ENCODE measurements at regions of chr5 and their contacts with region 1.

Region 1: GRCh38 chr5:43120720-43121564 is at the start of gene ZNF131:
- DNase-seq: peak; percentile 95 to 100 (median 98)
- H3K4me3 ChIP-seq: peak within 1 kb of the TSS; percentile 85 to 87
- H3K4me3 Mint-ChIP-seq: peak within 1 kb of the TSS; percentile 91 to 96 (median 94)
- H3K27ac ChIP-seq: peak within 1 kb of the TSS; percentile 97
- H3K27ac Mint-ChIP-seq: peak within 1 kb of the TSS; percentile 87 to 99 (median 98)
- H3K4me1 ChIP-seq: peaks cover 45% of the 10 kb centered on the region
- H3K4me1 Mint-ChIP-seq: peaks cover 21 to 46% (median 37%) of the 10 kb centered on the region in 4 donors
- H3K27me3 ChIP-seq: no peaks in the 10 kb centered on the region
- H3K27me3 Mint-ChIP-seq: no peaks in the 10 kb centered on the region
- total RNA-seq, gene ZNF131: 76.5 to 86.9 TPM

Region 2: GRCh38 chr5:41924872-41925554 is 1195.9 kb before region 1 on chr5 and contains the start of gene FBXO4:
- CTCF ChIA-PET with region 1: no interaction called
- POLR2A ChIA-PET with region 1: no interaction called
- intact Hi-C with region 1: loop called (anchors 2 kb)
- DNase-seq: peak; percentile 89 to 93 (median 91)
- H3K4me3 ChIP-seq: peak within 1 kb of the TSS; percentile 83 to 95
- H3K4me3 Mint-ChIP-seq: peak within 1 kb of the TSS; percentile 81 to 91 (median 89)
- H3K27ac ChIP-seq: peak within 1 kb of the TSS; percentile 93
- H3K27ac Mint-ChIP-seq: peak within 1 kb of the TSS; percentile 81 to 100 (median 98)
- H3K4me1 ChIP-seq: peaks cover 25% of the 10 kb centered on the region
- H3K4me1 Mint-ChIP-seq: peaks cover 10 to 33% (median 22%) of the 10 kb centered on the region in 4 donors
- H3K27me3 ChIP-seq: no peaks in the 10 kb centered on the region
- H3K27me3 Mint-ChIP-seq: no peaks in the 10 kb centered on the region
- total RNA-seq, gene FBXO4: 15.1 to 18.2 TPM

Region 3: GRCh38 chr5:43008369-43009153 is 112.4 kb before region 1 on chr5:
- CTCF ChIA-PET with region 1: interaction called, 4 read pairs
- POLR2A ChIA-PET with region 1: interaction called, 64 read pairs
- intact Hi-C with region 1: loop called (anchors 5 kb)
- DNase-seq: peak; percentile 89 to 92 (median 90)
- H3K4me3 ChIP-seq: peak overlapping the region; percentile 66 to 84
- H3K4me3 Mint-ChIP-seq: peak overlapping the region; percentile 84 to 94 (median 91)
- H3K27ac ChIP-seq: peak overlapping the region; percentile 85
- H3K27ac Mint-ChIP-seq: peak overlapping the region; percentile 90 to 99 (median 97)
- H3K4me1 ChIP-seq: peaks cover 38% of the 10 kb centered on the region
- H3K4me1 Mint-ChIP-seq: peaks cover 19 to 48% (median 33%) of the 10 kb centered on the region in 4 donors
- H3K27me3 ChIP-seq: no peaks in the 10 kb centered on the region
- H3K27me3 Mint-ChIP-seq: no peaks in the 10 kb centered on the region

Region 4: GRCh38 chr5:43066799-43067741 is 53.9 kb before region 1 on chr5:
- CTCF ChIA-PET with region 1: interaction called, 15 read pairs
- POLR2A ChIA-PET with region 1: interaction called, 157 read pairs
- intact Hi-C with region 1: loop called (anchors 1 kb)
- DNase-seq: peak; percentile 88 to 92 (median 90)
- H3K4me3 ChIP-seq: peak overlapping the region; percentile 97 to 99
- H3K4me3 Mint-ChIP-seq: peak overlapping the region; percentile 97 to 100 (median 98)
- H3K27ac ChIP-seq: peak overlapping the region; percentile 94
- H3K27ac Mint-ChIP-seq: peak overlapping the region; percentile 98 to 100 (median 99)
- H3K4me1 ChIP-seq: peaks cover 46% of the 10 kb centered on the region
- H3K4me1 Mint-ChIP-seq: peaks cover 31 to 59% (median 43%) of the 10 kb centered on the region in 4 donors
- H3K27me3 ChIP-seq: no peaks in the 10 kb centered on the region
- H3K27me3 Mint-ChIP-seq: no peaks in the 10 kb centered on the region

Region 5: DNA sequence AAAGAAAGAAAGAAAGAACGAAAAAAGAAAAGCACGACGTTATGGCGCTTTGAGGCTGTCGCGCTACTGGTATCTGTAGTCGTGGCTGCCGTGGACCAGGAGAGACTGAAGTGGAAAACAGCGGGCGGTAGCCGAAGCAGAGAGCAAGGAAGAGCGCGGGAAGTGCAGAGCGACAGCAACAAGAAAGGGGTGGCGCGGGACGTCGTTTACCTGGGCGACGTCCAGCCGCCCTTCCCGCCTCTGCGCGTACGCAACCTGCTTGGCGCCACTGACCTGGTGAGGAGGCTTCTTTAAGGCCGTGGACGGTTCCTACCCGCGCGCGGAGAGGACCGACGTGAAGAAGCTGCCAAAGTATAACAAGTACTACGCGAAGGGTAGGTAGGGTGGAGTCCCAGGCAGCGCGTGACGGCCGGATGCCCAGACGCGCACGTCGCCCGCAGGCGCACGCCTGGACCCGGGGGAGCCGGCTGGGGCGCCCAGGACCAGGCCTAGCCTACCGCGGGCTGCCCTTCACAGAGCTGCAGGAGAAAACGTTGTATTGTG is 275.9 kb after region 1 on chr5:
- CTCF ChIA-PET with region 1: no interaction called
- POLR2A ChIA-PET with region 1: interaction called, 9 read pairs
- intact Hi-C with region 1: loop called (anchors 5 kb)
- DNase-seq: peak; percentile 61 to 66 (median 64)
- H3K4me3 ChIP-seq: peak overlapping the region; percentile 94 to 95
- H3K4me3 Mint-ChIP-seq: peak overlapping the region; percentile 92 to 100 (median 98)
- H3K27ac ChIP-seq: peak overlapping the region; percentile 58
- H3K27ac Mint-ChIP-seq: peak overlapping the region; percentile 84 to 99 (median 96)
- H3K4me1 ChIP-seq: peaks cover 15% of the 10 kb centered on the region
- H3K4me1 Mint-ChIP-seq: peaks cover 9 to 44% (median 21%) of the 10 kb centered on the region in 4 donors
- H3K27me3 ChIP-seq: no peaks in the 10 kb centered on the region
- H3K27me3 Mint-ChIP-seq: no peaks in the 10 kb centered on the region

Region 6: DNA sequence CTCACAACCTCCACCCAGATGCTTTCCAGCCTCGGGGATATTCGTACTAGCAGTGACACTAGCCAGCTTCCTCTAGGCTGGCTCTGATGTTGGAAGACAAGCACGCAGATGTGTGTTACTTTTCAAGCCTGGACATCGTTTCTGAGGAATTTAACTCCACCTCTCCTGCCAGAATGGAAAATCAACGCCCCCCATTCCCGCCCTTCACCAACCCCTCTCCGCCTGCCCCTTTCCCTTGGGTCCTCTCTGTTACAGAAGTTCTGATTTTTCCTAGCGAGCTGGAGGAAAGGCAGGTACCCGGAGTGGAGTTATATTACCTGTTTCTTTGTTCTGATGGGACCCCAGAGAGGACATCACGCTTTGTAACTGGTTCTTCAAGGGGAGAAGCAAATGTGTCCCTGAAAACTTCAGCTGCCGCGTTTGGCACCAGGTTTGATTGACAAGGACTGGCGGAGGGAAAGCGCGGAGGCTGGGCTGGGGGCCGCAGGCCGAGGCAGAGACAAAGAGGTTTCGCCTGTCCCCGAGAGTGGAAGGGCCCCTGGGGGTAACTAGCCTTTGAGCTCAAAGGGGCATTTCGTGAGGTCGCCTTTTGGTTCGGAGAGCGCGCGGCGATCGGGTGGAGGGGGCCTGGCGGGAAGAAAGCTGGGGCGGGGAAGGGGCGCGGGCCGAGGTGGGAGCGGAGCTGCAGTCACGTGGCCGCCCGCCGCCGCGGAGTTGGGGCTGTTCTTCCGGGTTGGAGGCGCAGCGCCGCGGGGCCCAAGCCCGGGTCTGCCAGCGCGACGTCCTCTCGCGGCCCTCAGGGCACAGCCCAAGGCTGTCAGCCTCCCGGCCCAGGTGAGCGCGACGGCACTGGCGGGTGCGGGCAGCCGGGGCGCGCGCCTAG is 481.8 kb after region 1 on chr5 and contains the start of gene NNT:
- CTCF ChIA-PET with region 1: no interaction called
- POLR2A ChIA-PET with region 1: interaction called, 7 read pairs
- intact Hi-C with region 1: loop called (anchors 5 kb)
- DNase-seq: peak; percentile 75 to 84 (median 80)
- H3K4me3 ChIP-seq: peak within 1 kb of the TSS; percentile 91 to 99
- H3K4me3 Mint-ChIP-seq: peak within 1 kb of the TSS; percentile 90 to 98 (median 96)
- H3K27ac ChIP-seq: peak within 1 kb of the TSS; percentile 88
- H3K27ac Mint-ChIP-seq: peak within 1 kb of the TSS; percentile 91 to 98 (median 94)
- H3K4me1 ChIP-seq: peaks cover 38% of the 10 kb centered on the region
- H3K4me1 Mint-ChIP-seq: peaks cover 18 to 63% (median 49%) of the 10 kb centered on the region in 4 donors
- H3K27me3 ChIP-seq: no peaks in the 10 kb centered on the region
- H3K27me3 Mint-ChIP-seq: no peaks in the 10 kb centered on the region
- total RNA-seq, gene NNT: 56.1 to 57.6 TPM

Measured in CD4-positive, alpha-beta memory T cell (primary cell).